Activated CD4-positive, alpha-beta T cell treated with anti-CD3 and anti-CD28 coated beads for 36 hours (primary cell): ENCODE measurements at regions of chr2 and their contacts with region 1.

Region 1: DNA sequence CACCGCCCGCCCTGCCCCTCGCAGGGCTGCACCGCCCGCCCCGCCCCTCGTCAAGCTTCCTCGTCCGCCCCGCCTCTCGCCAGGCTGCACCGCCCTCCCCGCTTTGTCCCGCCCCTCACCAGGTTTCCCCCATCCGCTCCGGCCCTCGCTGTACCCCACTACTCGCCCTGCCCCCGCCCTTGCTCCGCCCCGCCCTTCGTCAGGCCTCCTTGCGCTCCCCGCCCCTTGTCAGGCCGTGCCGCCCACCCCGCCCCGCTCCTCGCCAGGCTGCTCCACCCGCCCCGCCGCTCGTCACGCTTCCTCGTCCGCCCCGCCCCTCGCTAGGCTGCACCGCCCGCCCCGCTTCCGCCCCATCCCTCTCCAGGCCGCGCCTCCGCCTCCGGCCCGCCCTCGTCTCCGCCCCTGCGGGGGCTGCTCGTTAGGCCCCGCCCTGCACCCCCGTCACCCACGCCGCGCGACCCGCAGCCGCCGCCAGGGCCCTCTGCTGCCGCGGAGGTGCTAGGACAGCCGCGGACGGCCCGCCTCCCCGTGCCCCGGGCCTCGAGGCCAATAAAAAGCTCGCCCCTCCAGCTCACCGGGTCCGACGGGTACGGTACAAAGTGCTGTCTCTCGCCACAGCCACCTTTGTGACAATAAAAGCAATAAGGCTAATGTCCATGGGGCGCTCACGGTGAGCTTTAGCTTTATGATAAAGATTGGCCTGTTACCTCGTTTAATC is 574 bp upstream of the DNPEP start:
- DNase-seq: peak; percentile 100
- ATAC-seq: peak; percentile 81
- H3K4me3 Mint-ChIP-seq: peak overlapping the region; percentile 97
- H3K27ac Mint-ChIP-seq: peak overlapping the region; percentile 82
- H3K4me1 Mint-ChIP-seq: peaks cover 9% of the 10 kb centered on the region
- H3K27me3 Mint-ChIP-seq: no peaks in the 10 kb centered on the region

Region 2: DNA sequence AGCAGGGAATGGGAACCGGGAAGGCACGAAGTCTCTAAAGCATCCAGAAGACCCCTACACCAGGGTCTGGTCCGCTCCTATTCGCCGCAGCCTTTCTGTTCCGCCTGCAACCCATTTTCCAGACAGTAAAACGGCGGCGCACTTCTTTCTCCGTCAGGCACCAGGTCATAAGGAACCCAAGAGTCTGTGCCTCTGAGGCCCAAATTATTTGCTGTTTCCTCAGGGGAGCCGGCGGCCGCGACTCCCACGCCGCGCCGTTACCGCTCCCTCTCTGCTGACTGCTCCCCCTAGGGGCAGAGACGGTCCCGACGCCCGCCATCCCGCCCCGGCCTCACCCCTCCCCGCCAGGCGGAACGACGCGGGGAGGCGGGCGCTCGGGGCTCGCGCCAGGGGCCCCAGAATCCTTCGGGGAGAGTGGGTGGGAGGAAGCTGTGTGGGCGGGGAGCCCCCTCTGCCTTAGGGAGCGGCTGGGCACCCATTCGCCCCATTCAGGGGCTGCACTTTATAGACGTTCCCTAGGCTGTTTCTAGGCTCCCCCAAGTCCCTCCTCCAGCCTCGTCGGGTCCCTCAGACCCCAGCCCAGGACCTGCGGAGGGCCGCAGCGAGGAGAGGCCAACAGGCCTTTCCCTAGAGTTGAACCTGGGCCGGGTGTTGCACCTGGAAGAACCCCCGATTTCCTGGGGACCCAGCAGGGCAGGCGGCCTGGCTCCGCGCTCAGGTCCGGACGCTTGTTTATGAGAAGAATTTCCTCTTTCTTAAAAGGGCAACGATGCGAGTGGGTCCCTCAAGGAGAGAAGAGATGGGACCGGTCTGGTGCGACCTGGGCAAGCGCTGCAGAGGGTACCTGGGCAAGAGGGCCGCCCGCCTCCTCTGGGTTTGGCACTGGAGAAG is 992.2 kb before region 1 on chr2:
- CTCF ChIA-PET with region 1: no interaction called
- POLR2A ChIA-PET with region 1: no interaction called
- intact Hi-C with region 1: loop called in 1 of 2 experiments (anchors 5 kb)
- DNase-seq: peak; percentile 97
- ATAC-seq: peak; percentile 68
- H3K4me3 Mint-ChIP-seq: peak overlapping the region; percentile 85
- H3K27ac Mint-ChIP-seq: peak overlapping the region; percentile 92
- H3K4me1 Mint-ChIP-seq: peaks cover 29% of the 10 kb centered on the region
- H3K27me3 Mint-ChIP-seq: peaks cover 6% of the 10 kb centered on the region

Region 3: DNA sequence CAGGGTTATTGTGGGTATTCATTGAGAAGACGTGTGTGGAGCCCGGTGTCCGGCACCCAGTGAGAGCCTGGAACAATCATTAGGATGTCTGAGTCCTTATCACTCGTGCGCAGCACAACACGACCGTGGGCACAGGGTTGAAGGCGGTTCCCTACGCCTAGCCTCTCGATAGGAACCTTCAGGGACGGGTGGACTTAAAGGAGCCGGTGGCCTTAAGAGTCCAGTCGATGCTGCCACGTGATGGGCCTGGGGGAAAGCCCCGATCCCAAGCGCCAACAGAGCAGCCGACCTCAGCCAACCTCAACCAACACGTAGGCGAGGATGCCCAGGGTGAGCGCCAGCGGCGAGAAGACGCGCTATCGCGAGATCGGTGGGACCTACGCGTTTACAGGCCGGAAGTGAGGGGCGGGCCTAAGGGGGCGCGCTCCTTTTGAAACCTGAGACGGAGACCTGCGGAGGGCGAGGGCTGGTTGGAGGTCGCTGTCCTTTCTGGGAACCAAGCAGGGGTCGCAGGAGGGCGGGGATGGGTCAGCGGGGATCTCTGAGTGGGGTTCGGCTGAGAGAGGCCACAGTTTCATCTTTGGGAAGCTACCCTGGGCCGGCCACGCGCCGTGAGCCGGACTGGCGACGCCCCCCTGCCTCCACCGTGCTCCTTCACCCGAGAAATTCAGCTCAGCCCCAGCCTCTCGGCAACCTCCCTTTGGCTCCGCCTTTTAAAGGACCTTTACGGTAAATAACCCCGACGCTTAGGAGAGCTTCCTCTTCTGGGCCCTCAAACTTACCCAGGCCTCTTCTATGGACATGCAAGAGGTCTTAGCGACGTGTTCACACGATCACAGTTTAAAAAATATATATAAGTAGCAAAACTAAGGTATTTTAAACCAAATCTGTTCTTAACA is 479.3 kb before region 1 on chr2:
- CTCF ChIA-PET with region 1: no interaction called
- POLR2A ChIA-PET with region 1: no interaction called
- intact Hi-C with region 1: loop called in 1 of 2 experiments (anchors 1 kb)
- DNase-seq: peak; percentile 97
- ATAC-seq: peak; percentile 98
- H3K4me3 Mint-ChIP-seq: peak overlapping the region; percentile 85
- H3K27ac Mint-ChIP-seq: peak overlapping the region; percentile 83
- H3K4me1 Mint-ChIP-seq: peaks cover 13% of the 10 kb centered on the region
- H3K27me3 Mint-ChIP-seq: peaks cover 16% of the 10 kb centered on the region

Region 4: DNA sequence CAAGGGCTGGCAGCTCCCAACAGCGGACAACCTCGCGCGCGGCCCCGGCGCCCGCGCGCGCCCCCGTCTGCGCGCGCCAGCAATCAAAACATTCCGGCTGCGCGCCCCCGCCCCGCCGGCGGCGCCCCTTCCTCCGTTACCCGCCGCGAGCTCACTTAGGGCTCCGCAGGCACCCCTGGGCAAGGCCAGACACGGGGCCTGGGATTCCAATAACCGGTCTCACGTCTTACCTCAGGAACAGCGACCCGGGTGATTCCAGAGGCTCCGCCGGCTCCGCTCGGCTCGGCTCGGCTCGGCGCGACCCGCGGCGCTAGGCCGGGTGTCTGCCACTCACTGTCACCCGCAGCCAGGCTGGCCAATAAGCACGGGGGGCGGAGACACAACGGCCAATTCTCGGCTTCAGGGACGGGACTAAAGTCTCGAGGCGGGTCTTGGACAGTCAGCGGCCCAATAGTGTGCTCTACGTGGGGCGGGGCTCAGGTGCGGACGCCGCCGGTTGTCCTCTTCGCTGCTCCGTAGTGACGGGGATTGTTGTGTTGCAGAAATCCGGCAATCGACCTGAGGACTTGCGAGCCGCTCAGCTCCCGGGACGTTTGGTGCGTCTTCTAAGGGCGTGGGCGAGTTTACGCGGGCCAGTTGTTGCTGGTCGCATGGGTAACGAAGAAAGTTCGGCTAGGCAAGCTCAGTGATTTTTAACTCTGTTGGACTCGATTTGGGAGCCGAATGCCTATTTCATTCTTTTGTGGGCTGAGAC is 158.8 kb before region 1 on chr2 and contains the starts of genes ANKZF1 and ATG9A:
- CTCF ChIA-PET with region 1: no interaction called
- POLR2A ChIA-PET with region 1: interaction called, 3 read pairs
- intact Hi-C with region 1: loop called in 1 of 2 experiments (anchors 1 kb)
- DNase-seq: peak; percentile 99
- ATAC-seq: peak; percentile 98
- H3K4me3 Mint-ChIP-seq: peak within 1 kb of the TSS; percentile 98
- H3K27ac Mint-ChIP-seq: peak within 1 kb of the TSS; percentile 98
- H3K4me1 Mint-ChIP-seq: peaks cover 34% of the 10 kb centered on the region
- H3K27me3 Mint-ChIP-seq: no peaks in the 10 kb centered on the region
- total RNA-seq, gene ANKZF1: 140 to 166 TPM
- total RNA-seq, gene ATG9A: 43.5 to 45.6 TPM

Region 5: DNA sequence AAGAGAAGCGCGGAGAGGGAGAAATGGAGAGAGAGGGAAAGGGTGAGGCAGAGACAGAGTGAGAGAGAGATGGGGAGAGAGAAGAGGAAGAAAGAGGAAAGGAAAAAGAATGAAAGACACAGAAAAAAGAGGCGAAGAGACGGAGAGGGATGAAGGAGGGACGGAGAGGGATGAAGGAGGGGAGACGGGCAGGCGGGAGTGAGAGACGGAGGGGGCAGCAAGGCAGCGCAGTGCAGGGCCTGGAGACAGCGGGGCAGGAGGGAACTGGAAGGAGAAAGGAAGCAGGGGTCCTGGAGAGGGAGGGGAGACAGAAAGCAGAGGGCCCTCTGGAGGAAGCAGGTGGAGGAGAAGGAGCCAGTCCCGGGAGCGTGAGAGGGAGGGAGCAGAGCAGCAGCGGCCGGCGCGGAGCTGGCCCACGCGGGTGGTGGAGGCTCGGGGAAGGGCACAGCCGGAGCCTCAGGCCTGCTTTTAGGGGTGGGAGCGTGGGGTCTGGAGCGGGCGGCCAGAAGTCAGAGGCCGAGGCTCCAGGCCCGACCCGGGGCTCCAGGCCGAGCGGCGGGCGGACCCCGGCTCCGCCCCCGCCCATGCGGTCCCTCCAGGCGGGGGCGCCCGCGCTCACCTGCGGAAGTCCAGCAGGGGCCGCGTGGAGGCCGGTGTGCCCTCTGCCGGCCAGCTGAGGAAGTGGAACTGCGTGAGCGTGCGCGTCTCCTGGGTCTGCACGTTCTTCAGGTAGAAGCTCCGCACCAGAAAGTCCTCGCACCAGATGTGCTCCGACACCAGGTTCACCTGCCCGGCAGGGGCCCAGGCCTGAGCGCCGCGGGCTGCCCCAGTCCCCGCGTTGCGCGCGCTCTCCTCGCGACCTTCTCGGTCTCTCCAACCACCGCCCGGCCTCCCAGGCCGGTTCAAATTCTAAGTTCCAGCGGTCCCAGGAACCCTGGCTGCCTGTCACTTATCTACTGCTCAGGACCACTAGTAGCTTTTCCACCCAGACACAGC is 93.6 kb before region 1 on chr2:
- CTCF ChIA-PET with region 1: interaction called, 7 read pairs
- POLR2A ChIA-PET with region 1: no interaction called
- intact Hi-C with region 1: loop called in 1 of 2 experiments (anchors 1 kb)
- DNase-seq: peak; percentile 93
- ATAC-seq: peak; percentile 90
- H3K4me3 Mint-ChIP-seq: peak overlapping the region; percentile 68
- H3K27ac Mint-ChIP-seq: peak overlapping the region; percentile 84
- H3K4me1 Mint-ChIP-seq: peaks cover 22% of the 10 kb centered on the region
- H3K27me3 Mint-ChIP-seq: no peaks in the 10 kb centered on the region

Region 6: DNA sequence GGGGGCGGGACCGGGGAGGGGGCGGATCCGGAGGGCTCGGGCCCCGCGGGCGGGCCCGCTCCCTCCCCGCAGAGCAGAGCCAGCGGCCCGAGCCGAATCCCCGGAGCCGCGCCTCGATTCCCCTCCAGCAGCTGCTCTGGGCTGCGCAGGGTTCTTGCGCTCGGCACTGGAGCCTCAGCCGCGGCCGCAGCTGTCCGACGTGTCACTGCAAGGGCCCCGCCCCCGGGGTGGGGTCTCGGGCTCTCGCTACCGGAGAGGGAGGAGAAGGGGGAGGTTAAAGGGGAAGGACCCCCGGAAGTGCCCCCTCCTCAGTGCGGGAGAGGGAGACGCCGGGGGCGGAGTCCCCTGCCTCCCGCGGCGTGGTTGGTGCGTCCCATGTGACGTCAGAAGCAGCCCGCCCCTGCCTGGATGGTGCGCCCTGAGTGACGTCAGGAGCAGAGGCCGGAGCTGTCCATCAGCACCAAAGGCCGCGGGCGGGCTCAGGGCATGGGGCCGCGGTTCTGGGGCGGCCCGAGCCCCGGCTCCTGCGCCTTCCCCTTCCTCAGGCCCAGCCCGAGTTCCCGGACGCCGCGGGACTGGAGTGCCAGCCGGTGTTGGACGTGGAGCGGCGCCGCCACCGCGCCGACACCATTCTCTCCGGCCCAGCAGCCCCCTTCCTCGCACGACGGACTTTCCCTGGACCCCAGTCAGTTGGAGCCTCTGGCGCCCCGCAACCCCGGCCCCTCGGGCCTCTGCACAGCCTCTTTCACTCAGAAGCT is 155.5 kb after region 1 on chr2 and contains the starts of genes CHPF and TMEM198:
- CTCF ChIA-PET with region 1: interaction called, 7 read pairs
- POLR2A ChIA-PET with region 1: no interaction called
- intact Hi-C with region 1: loop called (anchors 1 kb)
- DNase-seq: peak; percentile 98
- ATAC-seq: peak; percentile 85
- H3K4me3 Mint-ChIP-seq: peak within 1 kb of the TSS; percentile 87
- H3K27ac Mint-ChIP-seq: peak within 1 kb of the TSS; percentile 66
- H3K4me1 Mint-ChIP-seq: peaks cover 22% of the 10 kb centered on the region
- H3K27me3 Mint-ChIP-seq: no peaks in the 10 kb centered on the region
- total RNA-seq, gene CHPF: 14.1 to 17.1 TPM
- total RNA-seq, gene TMEM198: 2.4 to 2.7 TPM